Activated B cell treated with CpG ODN at 0.5 μM for 24 hours (primary cell): ENCODE measurements at regions of chr5 and their contacts with region 1.

Region 1: DNA sequence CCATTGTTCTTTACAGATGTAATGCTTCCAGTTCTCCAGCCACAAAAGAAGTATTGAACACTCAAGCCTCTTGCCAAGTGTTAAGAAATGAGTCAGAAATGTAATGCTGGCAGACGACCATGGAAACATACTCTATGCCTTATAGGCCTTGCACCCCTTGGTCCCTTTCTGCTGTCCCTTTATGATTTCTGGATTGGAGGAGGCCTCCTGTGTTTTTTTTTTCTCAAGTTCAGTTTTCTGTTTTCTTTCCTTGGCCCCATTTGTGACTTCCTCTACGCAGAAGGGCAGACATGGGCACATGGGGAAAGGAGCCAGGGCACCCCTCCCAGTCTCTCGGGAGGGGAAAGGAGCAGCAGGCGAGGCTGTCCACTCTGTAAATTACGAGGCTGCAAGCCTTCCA is 53.4 kb downstream of the SNX18 start:
- DNase-seq: no peak
- ATAC-seq: no peak
- H3K4me3 Mint-ChIP-seq: no peak overlapping the region
- H3K27ac Mint-ChIP-seq: no peak overlapping the region
- H3K4me1 Mint-ChIP-seq: no peaks in the 10 kb centered on the region
- H3K27me3 Mint-ChIP-seq: no peaks in the 10 kb centered on the region
- CTCF ChIP-seq: no peak

Region 2: GRCh38 chr5:54603381-54603780 is 32.5 kb after region 1 on chr5:
- CTCF ChIA-PET with region 1: no interaction called
- POLR2A ChIA-PET with region 1: no interaction called
- intact Hi-C with region 1: no loop called
- DNase-seq: no peak
- ATAC-seq: no peak
- H3K4me3 Mint-ChIP-seq: no peak overlapping the region
- H3K27ac Mint-ChIP-seq: no peak overlapping the region
- H3K4me1 Mint-ChIP-seq: peaks cover 10% of the 10 kb centered on the region
- H3K27me3 Mint-ChIP-seq: no peaks in the 10 kb centered on the region
- CTCF ChIP-seq: no peak

Region 3: DNA sequence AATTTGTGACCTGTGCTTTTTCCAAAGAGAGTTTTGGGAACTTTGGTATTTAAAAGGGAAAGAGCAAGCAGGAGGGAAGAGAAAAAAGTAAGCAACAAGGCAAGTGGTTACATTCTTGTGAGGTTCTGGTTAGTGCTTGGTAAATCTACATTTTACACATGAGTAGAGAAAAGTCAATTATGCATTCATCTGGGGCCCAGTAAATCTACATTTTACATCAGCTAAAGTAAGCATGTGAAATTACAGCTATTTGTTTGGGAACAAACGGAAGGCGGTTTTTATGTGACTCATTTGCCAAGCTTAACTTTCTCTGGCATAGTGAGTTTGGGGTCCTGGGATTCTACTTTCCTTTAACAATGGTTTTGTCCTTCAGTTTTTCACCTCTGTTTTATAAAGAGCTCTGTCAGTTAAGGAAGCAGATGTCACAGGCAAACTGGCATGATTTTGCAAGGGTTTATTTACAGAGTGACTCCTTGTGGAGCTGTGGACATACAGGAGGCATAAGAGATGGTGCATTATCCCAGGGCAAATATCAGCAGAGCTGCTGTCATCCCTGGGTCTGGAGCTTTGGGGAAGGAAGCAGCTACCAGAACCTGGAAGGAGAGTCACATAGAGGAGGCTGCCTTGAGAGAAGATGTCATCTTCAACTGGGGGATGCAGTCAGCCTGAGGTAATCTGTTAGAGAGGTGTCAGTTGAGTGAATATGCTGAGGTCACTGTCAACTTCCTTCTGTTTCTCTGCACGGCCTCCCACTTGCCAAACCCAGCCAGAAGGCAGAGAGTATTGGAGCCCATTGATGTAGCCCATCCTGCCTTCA is 49.0 kb after region 1 on chr5:
- CTCF ChIA-PET with region 1: no interaction called
- POLR2A ChIA-PET with region 1: no interaction called
- intact Hi-C with region 1: loop called (anchors 10 kb)
- DNase-seq: no peak
- ATAC-seq: no peak
- H3K4me3 Mint-ChIP-seq: no peak overlapping the region
- H3K27ac Mint-ChIP-seq: peak overlapping the region; percentile 10
- H3K4me1 Mint-ChIP-seq: peaks cover 43% of the 10 kb centered on the region
- H3K27me3 Mint-ChIP-seq: no peaks in the 10 kb centered on the region
- CTCF ChIP-seq: no peak